CD4-positive, alpha-beta memory T cell (primary cell): ENCODE measurements at regions of chr11 and their contacts with region 1.

Region 1: DNA sequence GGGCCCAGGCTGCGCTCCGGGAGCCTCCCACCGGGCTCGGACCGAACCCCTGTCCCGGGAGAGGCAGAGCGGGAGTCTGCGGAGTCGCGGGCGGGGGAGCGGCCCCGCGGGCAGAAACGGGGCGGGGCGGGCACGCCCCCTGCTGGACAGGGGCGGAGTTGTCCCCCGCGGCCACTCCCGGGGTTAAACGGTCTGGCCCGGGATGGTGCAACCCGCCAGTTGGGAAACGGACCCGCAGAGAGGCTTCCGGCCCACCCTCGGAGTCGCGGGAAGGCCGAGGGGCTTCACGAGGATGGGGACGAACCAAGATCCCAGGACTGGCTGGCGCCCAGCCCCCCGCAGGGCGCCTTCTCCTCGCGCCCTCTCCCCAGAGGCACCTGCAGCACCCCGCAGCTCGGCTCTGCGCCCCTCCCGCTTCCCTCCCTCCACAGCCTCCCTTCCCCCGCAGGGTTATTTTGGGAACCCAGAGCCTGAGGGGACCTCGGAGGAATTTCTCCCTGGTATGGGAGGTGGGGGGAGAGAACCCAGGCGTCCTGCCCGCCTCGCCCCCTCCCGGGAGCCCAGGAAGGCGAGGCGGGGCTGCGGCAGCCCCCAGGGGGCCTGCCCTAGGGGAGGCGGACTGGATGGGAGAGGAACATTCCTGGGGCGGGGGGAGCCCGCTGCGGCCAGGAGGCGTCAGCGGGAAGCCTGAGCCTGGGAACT is 902 bp downstream of the RASGRP2 start:
- DNase-seq: peak; percentile 65 to 83 (median 74)
- H3K4me3 ChIP-seq: peak overlapping the region; percentile 95 to 98
- H3K4me3 Mint-ChIP-seq: peak overlapping the region; percentile 17 to 99 (median 97)
- H3K27ac ChIP-seq: peak overlapping the region; percentile 81
- H3K27ac Mint-ChIP-seq: peak overlapping the region in 1 of 7 donors; percentile 96
- H3K4me1 ChIP-seq: peaks cover 38% of the 10 kb centered on the region
- H3K4me1 Mint-ChIP-seq: peaks cover 21 to 62% (median 35%) of the 10 kb centered on the region in 4 donors
- H3K27me3 ChIP-seq: no peaks in the 10 kb centered on the region
- H3K27me3 Mint-ChIP-seq: no peaks in the 10 kb centered on the region

Region 2: DNA sequence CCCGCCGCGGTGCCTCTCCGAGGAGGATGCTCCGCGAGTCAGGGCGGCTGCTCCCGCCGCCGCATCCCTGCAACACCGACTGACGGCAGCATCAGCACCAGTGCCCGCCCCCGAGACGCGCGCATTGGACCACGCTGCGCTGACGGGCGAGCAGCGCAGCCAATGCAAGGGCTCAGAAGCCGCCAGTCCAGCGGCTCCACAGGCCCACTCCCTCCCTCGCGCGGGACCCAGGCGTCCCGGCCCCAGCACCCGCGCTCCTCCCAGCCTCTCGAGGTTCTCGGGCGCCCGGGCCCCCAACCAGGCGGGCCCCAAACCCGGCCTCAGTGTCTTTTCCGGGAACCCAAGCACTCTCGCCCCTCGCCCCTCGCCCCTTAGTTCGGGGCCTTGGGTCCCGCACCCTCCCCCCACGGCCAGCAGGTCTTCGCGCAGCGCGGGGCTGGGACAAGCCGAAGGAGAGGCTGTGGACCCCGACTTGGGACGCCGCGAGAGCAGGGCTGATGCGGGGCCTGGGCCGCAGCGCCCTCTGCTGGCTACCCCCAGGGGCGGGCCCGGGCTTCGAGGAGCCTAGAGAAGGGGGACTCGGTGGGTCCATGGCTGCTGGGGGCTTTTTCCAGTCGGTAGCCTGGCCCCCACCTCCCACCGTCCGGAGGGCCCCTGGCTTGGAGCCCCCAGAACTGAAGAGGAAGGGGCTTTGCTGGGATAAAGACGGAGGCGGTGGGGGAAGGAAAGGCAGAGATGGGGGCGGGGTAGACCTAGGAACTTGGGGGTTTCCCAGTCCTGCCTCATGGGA is 19.7 kb before region 1 on chr11 and contains the start of gene NRXN2:
- CTCF ChIA-PET with region 1: no interaction called
- POLR2A ChIA-PET with region 1: interaction called, 20 read pairs
- intact Hi-C with region 1: loop called (anchors 1 kb)
- DNase-seq: peak; percentile 82 to 87 (median 84)
- H3K4me3 ChIP-seq: peak within 1 kb of the TSS; percentile 47 to 67
- H3K4me3 Mint-ChIP-seq: peak within 1 kb of the TSS; percentile 57 to 77 (median 69)
- H3K27ac ChIP-seq: peak within 1 kb of the TSS; percentile 82
- H3K27ac Mint-ChIP-seq: peak within 1 kb of the TSS; percentile 15 to 81 (median 63)
- H3K4me1 ChIP-seq: peaks cover 8% of the 10 kb centered on the region
- H3K4me1 Mint-ChIP-seq: peaks cover 11 to 30% (median 15%) of the 10 kb centered on the region in 4 donors
- H3K27me3 ChIP-seq: peaks cover 11% of the 10 kb centered on the region
- H3K27me3 Mint-ChIP-seq: peaks cover 15 to 18% of the 10 kb centered on the region in 2 donors
- total RNA-seq, gene NRXN2: 0.30 TPM in 1 of 2 experiments, not detected in the other

Region 3: GRCh38 chr11:64778508-64779346 is 35.7 kb after region 1 on chr11 and contains the start of gene SF1:
- CTCF ChIA-PET with region 1: interaction called, 37 read pairs
- POLR2A ChIA-PET with region 1: interaction called, 1,500 read pairs
- intact Hi-C with region 1: loop called (anchors 1 kb)
- DNase-seq: peak; percentile 99 to 100 (median 100)
- H3K4me3 ChIP-seq: peak within 1 kb of the TSS; percentile 94 to 98
- H3K4me3 Mint-ChIP-seq: peak within 1 kb of the TSS; percentile 89 to 96 (median 94)
- H3K27ac ChIP-seq: peak within 1 kb of the TSS; percentile 98
- H3K27ac Mint-ChIP-seq: peak within 1 kb of the TSS; percentile 98 to 100 (median 98)
- H3K4me1 ChIP-seq: peaks cover 57% of the 10 kb centered on the region
- H3K4me1 Mint-ChIP-seq: peaks cover 41 to 70% (median 55%) of the 10 kb centered on the region in 4 donors
- H3K27me3 ChIP-seq: no peaks in the 10 kb centered on the region
- H3K27me3 Mint-ChIP-seq: peaks cover 0 to 4% of the 10 kb centered on the region in 2 donors
- total RNA-seq, gene SF1: 805 to 832 TPM

Region 4: DNA sequence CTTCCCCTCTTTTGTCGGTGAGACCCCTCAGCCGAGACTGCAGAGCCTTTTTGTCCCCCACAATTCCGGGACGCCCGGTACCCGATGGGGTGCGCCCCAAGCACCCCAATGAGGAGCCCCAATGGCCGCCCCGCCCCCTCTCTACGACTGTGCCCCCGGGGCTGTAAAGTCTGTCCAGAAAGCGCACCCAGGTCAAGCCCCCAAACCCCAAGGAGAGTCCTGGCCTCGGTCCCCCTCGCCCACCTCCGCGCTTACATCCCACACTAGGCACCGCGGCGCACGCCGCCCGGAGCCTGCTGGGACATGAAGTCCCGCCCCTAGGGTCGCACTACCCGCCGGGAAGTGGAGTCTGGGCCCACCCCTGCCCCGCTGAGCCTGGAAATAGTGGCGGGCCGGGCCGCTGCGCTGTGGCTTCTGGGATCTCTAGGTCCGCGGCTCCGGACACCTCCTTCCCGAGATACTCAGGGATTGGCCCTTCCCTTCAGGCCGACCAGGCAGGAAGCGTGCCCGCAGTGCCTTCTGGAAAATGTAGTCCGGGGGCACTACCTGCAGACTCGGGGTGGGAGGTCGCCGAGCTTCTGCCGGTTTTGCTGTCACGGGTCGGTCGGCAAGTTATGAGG is 67.3 kb after region 1 on chr11 and contains the start of gene MEN1:
- CTCF ChIA-PET with region 1: no interaction called
- POLR2A ChIA-PET with region 1: interaction called, 44 read pairs
- intact Hi-C with region 1: no loop called
- DNase-seq: peak; percentile 76 to 86 (median 80)
- H3K4me3 ChIP-seq: peak within 1 kb of the TSS; percentile 73 to 96
- H3K4me3 Mint-ChIP-seq: peak within 1 kb of the TSS; percentile 92 to 99 (median 95)
- H3K27ac ChIP-seq: peak within 1 kb of the TSS; percentile 79
- H3K27ac Mint-ChIP-seq: peak within 1 kb of the TSS; percentile 78 to 97 (median 95)
- H3K4me1 ChIP-seq: peaks cover 12% of the 10 kb centered on the region
- H3K4me1 Mint-ChIP-seq: peaks cover 9 to 31% (median 19%) of the 10 kb centered on the region in 4 donors
- H3K27me3 ChIP-seq: no peaks in the 10 kb centered on the region
- H3K27me3 Mint-ChIP-seq: no peaks in the 10 kb centered on the region
- total RNA-seq, gene MEN1: 41.3 to 42.7 TPM

Region 5: GRCh38 chr11:64864473-64865285 is 121.6 kb after region 1 on chr11:
- CTCF ChIA-PET with region 1: no interaction called
- POLR2A ChIA-PET with region 1: interaction called, 21 read pairs
- intact Hi-C with region 1: no loop called
- DNase-seq: peak in 2 of 5 donors; percentile 24 to 64
- H3K4me3 ChIP-seq: peak overlapping the region; percentile 40 to 59
- H3K4me3 Mint-ChIP-seq: peak overlapping the region; percentile 64 to 91 (median 82)
- H3K27ac ChIP-seq: peak overlapping the region; percentile 68
- H3K27ac Mint-ChIP-seq: peak overlapping the region; percentile 76 to 99 (median 95)
- H3K4me1 ChIP-seq: peaks cover 99% of the 10 kb centered on the region
- H3K4me1 Mint-ChIP-seq: peaks cover 53 to 95% (median 78%) of the 10 kb centered on the region in 4 donors
- H3K27me3 ChIP-seq: no peaks in the 10 kb centered on the region
- H3K27me3 Mint-ChIP-seq: no peaks in the 10 kb centered on the region

Region 6: DNA sequence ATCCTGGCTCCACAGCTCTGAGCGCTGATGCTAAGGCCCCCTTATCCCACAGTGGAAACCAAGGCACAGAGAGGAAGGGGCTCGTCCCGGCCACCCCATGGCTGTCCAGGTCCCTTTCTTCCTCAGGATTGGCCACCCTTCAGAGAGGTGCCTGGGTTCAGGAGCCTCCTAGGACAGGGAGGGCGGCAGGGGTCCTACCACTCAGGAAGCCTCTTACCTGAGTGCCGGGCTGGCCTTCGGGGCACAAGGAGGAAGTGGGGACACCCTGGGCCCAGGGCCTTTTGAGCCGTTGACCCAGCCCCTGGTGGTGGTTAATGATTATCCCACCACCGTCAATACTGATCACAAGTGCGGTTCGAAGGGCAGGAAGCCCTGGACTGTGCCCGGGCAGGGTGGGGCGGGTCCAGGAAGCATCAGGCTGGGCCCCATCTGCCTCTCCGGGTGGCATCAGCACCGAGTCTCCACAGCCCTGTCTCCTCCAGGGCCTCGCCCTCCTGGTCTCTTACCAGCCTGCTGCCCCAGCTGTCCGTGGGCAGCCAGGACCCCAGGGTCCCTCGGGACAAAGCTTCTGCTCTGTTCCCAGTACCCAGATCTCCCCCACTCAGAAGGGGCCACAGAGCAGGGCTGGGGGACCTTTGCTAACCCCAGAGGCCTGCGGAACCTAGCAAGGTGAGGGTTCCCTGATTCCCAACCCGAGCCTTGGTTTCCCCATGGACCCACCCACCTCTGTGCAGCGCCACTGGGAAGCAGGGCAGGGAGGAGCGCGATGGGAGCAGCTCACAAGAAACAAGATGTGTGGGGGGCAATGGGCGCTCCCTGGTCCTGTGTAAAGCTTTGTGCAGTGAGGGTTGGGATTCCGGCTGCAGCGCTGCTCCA is 150.4 kb after region 1 on chr11:
- CTCF ChIA-PET with region 1: no interaction called
- POLR2A ChIA-PET with region 1: no interaction called
- intact Hi-C with region 1: no loop called
- DNase-seq: no peak
- H3K4me3 ChIP-seq: no peak overlapping the region
- H3K4me3 Mint-ChIP-seq: no peak overlapping the region
- H3K27ac ChIP-seq: no peak overlapping the region
- H3K27ac Mint-ChIP-seq: no peak overlapping the region
- H3K4me1 ChIP-seq: peaks cover 9% of the 10 kb centered on the region
- H3K4me1 Mint-ChIP-seq: peaks cover 0 to 12% (median 2%) of the 10 kb centered on the region in 4 donors
- H3K27me3 ChIP-seq: no peaks in the 10 kb centered on the region
- H3K27me3 Mint-ChIP-seq: no peaks in the 10 kb centered on the region